Activated CD4-positive, alpha-beta T cell treated with anti-CD3 and anti-CD28 coated beads for 36 hours (primary cell): ENCODE measurements at regions of chr10 and their contacts with region 1.

Region 1: GRCh38 chr10:112434988-112435619 is 11.6 kb downstream of the ZDHHC6 start:
- DNase-seq: no peak
- ATAC-seq: no peak
- H3K4me3 Mint-ChIP-seq: no peak overlapping the region
- H3K27ac Mint-ChIP-seq: no peak overlapping the region
- H3K4me1 Mint-ChIP-seq: no peaks in the 10 kb centered on the region
- H3K27me3 Mint-ChIP-seq: no peaks in the 10 kb centered on the region

Region 2: DNA sequence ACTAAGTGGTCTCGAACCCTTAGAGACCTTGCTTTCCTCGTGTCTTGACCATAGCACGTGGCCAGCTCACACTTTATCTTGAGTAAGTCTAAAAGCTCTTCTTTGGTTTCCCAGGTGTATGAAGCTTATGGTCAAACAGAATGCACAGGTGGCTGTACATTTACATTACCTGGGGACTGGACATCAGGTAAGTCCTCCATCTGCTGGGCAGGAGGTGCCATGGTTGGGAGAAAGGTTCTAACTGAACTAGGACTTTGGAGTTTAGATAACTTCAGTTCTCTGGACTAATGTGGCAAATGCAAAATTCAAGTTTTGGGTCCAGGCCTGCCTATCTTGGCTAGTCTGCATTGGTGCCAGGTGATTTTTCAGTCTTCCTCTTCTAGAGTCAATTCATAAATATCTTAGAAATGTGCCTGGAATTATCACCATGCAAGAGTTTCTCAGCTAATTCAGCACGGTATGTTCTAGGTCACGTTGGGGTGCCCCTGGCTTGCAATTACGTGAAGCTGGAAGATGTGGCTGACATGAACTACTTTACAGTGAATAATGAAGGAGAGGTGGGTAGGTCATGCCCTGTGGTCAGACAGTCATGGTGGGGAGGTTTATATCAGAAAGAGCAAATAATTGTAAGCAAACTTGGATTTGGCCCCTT is 13.5 kb before region 1 on chr10:
- CTCF ChIA-PET with region 1: interaction called, 19 read pairs
- POLR2A ChIA-PET with region 1: no interaction called
- intact Hi-C with region 1: no loop called
- DNase-seq: no peak
- ATAC-seq: no peak
- H3K4me3 Mint-ChIP-seq: no peak overlapping the region
- H3K27ac Mint-ChIP-seq: peak overlapping the region; percentile 29
- H3K4me1 Mint-ChIP-seq: no peaks in the 10 kb centered on the region
- H3K27me3 Mint-ChIP-seq: no peaks in the 10 kb centered on the region

Region 3: GRCh38 chr10:114285961-114286441 is 1850.9 kb after region 1 on chr10:
- CTCF ChIA-PET with region 1: no interaction called
- POLR2A ChIA-PET with region 1: interaction called, 10 read pairs
- intact Hi-C with region 1: no loop called
- DNase-seq: no peak
- ATAC-seq: no peak
- H3K4me3 Mint-ChIP-seq: no peak overlapping the region
- H3K27ac Mint-ChIP-seq: no peak overlapping the region
- H3K4me1 Mint-ChIP-seq: no peaks in the 10 kb centered on the region
- H3K27me3 Mint-ChIP-seq: no peaks in the 10 kb centered on the region